Cardiac septum (tissue), 1 donor: ENCODE measurements at regions of chr6 and their contacts with region 1.

Region 1: GRCh38 chr6:45930420-45931040 is 85.1 kb downstream of the CLIC5 start:
- DNase-seq: peak; percentile 89

Region 2: DNA sequence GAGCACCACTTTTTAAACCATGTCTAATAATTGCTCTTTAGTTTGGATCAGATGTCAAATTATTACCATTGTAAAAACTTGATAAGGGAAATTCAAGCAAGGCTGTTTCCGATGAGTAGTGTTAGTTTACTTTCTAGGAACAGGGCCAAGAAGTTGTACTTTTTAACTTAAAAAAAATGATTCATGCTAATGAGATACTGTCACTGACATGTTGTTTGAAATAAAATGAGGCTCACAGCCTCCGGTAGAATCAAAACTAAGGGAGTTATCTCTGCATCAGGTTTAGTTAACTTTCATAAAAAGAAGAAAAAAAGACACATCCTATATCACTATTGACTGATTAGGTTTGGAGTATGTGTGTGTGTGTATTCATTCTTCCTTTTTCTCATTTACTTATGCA is 497.6 kb before region 1 on chr6:
- intact Hi-C with region 1: no loop called
- DNase-seq: no peak

Region 3: DNA sequence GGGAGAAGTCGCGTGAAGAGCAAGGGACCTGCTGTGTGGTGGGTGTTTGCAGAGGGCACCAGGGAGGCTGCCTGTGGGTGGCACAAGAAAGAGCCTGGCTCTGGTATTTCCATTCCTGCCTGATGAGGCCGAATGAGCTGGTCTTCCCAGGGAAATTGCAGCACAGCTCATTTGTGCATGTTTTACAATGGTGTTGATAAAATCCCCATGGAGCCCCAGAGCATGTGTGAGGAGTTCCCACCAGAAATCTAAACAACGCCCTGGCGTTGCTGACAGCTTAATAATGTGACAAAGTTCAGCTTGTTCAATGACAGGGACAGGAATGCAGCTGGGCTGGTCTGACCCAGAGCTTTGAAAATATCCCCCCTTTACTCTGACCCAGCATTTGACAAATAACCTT is 50.4 kb before region 1 on chr6:
- intact Hi-C with region 1: no loop called
- DNase-seq: no peak

Region 4: DNA sequence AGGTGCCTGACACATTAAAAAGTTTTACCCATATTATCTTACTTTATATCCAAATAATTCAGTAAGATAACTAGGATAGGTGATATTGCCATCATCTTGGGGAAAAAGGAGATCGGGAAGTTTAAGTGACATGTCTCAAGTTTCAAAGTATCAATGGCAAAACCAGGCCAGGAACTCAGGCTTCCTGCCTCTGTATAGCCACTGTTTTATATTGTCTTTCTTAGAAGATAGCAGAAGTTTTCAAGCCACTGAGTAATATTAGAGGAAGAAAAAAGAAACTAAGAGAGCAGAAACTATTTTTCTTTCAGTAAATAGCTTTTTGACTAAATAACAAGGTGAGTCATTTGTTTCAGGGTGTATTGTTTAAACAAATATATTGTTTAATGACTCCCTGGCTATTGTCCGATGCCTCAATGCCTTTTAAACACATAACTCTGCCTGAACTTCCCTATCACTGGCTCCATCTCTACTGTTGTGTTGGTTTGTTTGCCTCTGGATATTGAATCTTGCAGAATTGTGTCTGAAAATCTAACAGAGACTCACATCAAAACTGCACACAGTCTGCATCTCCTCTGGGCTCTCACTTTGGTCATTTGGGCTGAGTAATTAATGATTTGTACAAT is 104.6 kb after region 1 on chr6:
- intact Hi-C with region 1: loop called (anchors 5 kb)
- DNase-seq: no peak

Region 5: GRCh38 chr6:46203391-46204177 is 273.1 kb after region 1 on chr6:
- intact Hi-C with region 1: loop called (anchors 10 kb)
- DNase-seq: no peak

Region 6: GRCh38 chr6:46796848-46797580 is 866.5 kb after region 1 on chr6:
- intact Hi-C with region 1: no loop called
- DNase-seq: no peak